Sciatic nerve (tissue), 2 donors: ENCODE measurements at regions of chr20 and their contacts with region 1.

Region 1: GRCh38 chr20:47392015-47392720 is 35.7 kb upstream of the ZMYND8 start:
- DNase-seq: no peak
- ATAC-seq: peak; percentile 17

Region 2: DNA sequence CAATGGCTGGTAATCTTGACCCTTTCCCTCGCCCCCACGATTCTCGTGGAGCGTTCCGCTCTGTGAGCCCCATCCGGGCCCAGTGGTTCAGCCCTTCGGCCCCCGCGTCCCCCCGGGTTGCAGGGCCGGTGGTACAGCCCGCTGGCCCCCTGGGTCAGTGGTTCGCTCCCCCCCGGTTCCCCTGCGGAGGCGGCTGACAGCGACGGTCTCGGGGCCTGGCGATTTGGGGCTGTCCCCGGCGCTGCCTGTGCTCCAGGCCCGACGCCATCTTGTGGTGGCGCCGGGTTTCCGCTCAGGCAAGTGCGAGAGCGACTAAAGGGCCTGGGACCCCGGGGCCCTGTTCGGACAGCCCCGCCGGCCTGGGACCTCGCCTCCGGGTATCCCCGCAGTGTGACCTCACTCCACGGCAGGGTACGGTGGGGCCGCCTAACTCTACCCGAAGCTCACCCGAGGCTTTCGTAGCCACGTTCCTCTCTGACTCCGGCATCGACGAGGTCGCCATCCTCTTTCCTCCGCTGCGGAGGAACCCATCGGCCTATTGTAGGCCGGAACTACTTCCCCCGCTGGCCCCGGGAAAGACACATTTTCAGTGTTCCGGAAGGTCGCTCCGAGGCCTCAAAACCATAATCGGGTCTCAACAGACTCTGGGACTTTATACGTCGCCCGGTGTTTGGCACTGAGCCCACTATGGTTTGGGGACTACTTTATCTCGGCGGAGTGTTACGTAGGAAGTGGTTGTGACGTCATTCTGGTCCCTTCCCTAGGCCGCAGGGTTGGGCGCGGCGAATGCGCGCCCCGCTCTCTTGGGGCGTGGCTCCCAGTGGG is 1420.3 kb before region 1 on chr20 and contains the start of gene ZNF335:
- intact Hi-C with region 1: no loop called
- DNase-seq: peak; percentile 96
- ATAC-seq: peak; percentile 96
- total RNA-seq, gene ZNF335: 22.3 TPM

Region 3: GRCh38 chr20:46875059-46875458 is 517.1 kb before region 1 on chr20:
- intact Hi-C with region 1: loop called (anchors 2 kb)
- DNase-seq: no peak
- ATAC-seq: no peak

Region 4: GRCh38 chr20:47411161-47411560 is 19.0 kb after region 1 on chr20:
- intact Hi-C with region 1: no loop called
- DNase-seq: no peak
- ATAC-seq: no peak